Transverse colon (tissue), 4 donors: ENCODE measurements at regions of chr12 and their contacts with region 1.

Region 1: DNA sequence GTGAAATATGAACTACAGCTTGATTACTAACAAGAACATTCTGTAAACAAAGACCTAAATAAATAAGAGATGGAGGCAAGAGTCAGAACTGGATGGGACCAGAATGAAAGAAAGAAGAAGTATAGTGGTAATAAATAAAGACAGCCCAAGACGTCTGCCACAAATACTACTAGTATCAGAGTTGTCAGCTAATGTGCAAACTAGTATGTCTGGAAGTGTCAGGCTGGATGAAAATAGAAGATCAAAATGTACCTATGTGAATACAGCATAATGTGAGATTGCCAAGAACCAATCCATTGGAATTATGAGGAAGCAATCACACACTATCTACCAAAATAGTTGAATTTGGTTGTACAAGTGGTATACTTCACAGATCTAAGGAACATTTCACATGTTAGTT is 353.0 kb downstream of the BTG1 start:
- DNase-seq: no peak
- H3K4me3 ChIP-seq: no peak overlapping the region
- H3K27ac ChIP-seq: no peak overlapping the region
- H3K4me1 ChIP-seq: no peaks in the 10 kb centered on the region
- H3K27me3 ChIP-seq: no peaks in the 10 kb centered on the region
- CTCF ChIP-seq: no peak
- EP300 ChIP-seq: no peak
- POLR2A ChIP-seq: no peak

Region 2: GRCh38 chr12:90366286-90366685 is 1426.3 kb before region 1 on chr12:
- in situ Hi-C with region 1: no loop called
- intact Hi-C with region 1: loop called (anchors 10 kb)
- DNase-seq: no peak
- H3K4me3 ChIP-seq: no peak overlapping the region
- H3K27ac ChIP-seq: no peak overlapping the region
- H3K4me1 ChIP-seq: no peaks in the 10 kb centered on the region
- H3K27me3 ChIP-seq: no peaks in the 10 kb centered on the region
- CTCF ChIP-seq: no peak
- EP300 ChIP-seq: no peak
- POLR2A ChIP-seq: no peak